ENCODE measurements at regions of chr6 and their contacts with region 1.

Region 1: DNA sequence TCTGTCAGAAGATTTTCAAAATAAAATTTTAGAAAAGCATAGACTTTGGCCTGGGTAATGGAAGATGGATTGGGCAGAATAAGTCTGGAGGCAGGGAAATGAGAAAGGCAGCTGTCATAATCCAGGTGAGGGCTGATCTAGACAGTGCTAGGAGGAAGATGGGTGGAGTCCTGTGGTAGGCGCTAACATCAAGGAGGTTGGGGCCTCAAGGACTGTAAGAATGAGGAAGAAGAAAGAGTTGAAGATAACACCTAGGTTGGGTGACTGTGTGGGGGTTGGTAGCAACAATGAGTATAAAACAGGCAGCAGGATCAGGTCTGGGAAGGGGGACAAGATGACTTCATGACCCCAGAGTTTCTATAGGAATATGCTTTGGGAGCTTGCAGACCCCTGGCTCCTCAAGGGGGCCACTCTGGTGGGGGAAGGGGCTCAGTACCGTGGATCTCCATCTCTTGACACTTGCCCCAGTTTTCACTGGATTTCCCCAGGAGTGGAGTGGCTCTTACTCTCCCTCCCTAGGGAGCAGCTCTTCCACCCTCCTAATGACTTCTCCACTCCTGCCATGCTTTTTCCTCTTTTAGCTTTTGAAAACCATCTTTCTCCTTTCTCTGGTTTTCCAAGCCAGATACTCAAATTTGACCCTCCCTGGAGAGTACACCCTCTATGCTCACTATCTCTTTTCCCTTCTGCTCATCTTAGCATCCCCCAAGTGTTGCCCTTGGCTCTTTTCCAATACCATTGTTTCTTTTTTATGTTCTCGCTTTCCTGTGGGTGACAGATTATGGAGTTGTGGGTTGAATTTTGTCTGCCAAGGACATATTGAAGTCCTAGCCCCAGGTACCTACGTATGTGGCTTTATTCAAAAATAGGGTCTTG is 14.8 kb downstream of the TRIM31 start:
- DNase-seq: no peak
- CTCF ChIP-seq: no peak

Region 2: DNA sequence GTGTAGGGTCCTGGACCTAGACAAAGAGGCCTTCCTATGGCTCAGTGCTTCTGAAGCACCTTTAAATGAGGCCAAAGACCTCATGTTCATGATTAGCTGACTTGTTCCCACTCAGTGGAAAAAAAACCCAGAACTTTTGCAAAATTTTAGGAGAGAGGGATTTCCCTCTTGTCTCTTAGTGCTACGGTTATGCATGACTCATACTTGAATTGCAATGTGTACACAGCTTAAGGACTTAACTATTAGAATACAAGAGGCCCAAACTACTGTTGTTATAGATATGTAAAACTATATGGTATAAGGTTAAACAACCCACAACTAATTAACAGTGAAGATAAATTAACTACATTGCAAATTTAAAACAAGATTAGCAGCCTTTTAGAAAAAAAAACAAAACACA is 188.1 kb before region 1 on chr6:
- in situ Hi-C with region 1: no loop called
- DNase-seq: no peak
- CTCF ChIP-seq: no peak

Region 3: GRCh38 chr6:30175765-30176164 is 77.6 kb after region 1 on chr6:
- in situ Hi-C with region 1: loop called (anchors 5 kb)
- DNase-seq: no peak
- CTCF ChIP-seq: no peak

Region 4: DNA sequence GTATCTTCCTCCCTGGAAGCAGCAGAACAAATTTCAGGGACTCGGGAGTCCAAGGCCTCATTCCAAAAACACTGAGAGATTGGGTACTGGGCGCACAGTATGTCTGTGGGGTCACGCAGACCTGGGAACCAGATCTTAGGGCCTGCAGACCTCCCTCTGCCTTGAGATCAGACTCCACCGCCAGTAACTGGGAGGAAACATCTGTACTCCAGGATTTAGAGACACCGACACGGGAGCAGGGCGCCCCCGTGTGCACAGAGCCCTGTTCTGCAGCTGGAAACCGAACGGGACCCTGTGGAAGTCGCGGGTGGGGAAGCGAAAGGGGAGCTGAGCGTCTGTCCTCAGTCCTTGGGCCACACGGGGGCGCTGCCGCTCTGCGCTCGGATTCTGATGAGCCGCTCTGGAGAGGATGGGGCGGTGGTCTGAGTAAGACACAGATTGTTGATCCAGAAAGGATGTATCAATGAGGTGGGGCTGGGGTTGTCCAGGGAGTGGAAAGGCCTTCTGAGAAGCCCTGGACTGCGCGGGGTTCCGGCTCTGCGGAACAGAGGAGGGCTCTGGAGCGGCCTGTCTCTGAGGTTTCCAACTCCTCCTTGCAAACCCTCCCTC is 355.5 kb after region 1 on chr6:
- in situ Hi-C with region 1: no loop called
- DNase-seq: peak; percentile 91
- CTCF ChIP-seq: peak; percentile 92

Measured in GM13977 (cell line).